Common myeloid progenitor, CD34-positive (primary cell): ENCODE measurements at regions of chr1 and their contacts with region 1.

Region 1: GRCh38 chr1:108125312-108126138 is 74.6 kb downstream of the SLC25A24 start:
- DNase-seq: peak; percentile 84 to 89 (median 85)
- H3K4me3 ChIP-seq: no peak overlapping the region
- H3K27ac ChIP-seq: no peak overlapping the region
- H3K4me1 ChIP-seq: peaks cover 0 to 16% (median 8%) of the 10 kb centered on the region in 4 experiments
- H3K27me3 ChIP-seq: no peaks in the 10 kb centered on the region

Region 2: DNA sequence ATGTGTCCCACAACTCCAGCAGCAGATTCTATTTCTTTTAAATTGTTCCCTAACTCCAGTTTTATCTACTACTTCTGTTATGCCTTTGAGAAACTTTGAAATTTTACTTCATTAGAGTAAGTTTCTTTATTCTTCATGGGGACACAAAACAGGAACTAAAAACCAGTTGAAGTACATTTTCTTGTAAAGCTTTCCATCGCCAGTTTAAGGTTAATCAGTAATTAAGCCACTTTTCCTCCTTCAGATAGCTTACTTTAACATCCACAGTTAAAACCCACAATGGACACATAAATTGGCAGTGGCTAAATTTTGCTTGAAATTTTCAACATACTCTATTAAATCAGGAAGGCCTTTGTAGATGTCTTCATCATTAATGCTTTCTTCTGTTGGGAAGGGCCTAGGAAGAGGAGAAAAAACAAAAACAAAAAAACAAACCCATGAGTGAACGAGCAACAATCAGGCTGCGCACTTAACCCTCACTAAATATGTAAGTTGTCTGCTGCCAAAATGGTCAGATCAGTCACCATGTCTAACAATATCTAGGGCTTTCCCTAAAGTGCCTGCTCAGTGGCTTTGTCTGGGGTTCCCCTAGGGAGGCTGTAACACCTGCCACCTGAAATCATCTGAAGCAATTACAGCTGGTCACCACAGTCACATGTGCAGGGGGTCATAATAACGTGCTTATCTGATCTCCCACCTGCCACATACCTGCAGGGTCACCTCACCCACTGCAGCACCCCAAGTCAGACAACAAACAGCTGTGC is 348.4 kb before region 1 on chr1:
- CTCF ChIA-PET with region 1: interaction called, 271 read pairs
- POLR2A ChIA-PET with region 1: interaction called, 5 read pairs
- DNase-seq: peak in 2 of 3 donors; percentile 36 to 37
- H3K4me3 ChIP-seq: no peak overlapping the region
- H3K27ac ChIP-seq: no peak overlapping the region
- H3K4me1 ChIP-seq: peaks cover 0 to 5% (median 2%) of the 10 kb centered on the region in 4 experiments
- H3K27me3 ChIP-seq: no peaks in the 10 kb centered on the region

Region 3: GRCh38 chr1:108043707-108044287 is 81.7 kb before region 1 on chr1:
- CTCF ChIA-PET with region 1: interaction called, 35 read pairs
- POLR2A ChIA-PET with region 1: no interaction called
- DNase-seq: peak; percentile 85 to 97 (median 95)
- H3K4me3 ChIP-seq: no peak overlapping the region
- H3K27ac ChIP-seq: no peak overlapping the region
- H3K4me1 ChIP-seq: peaks cover 12 to 73% (median 43%) of the 10 kb centered on the region in 4 experiments
- H3K27me3 ChIP-seq: no peaks in the 10 kb centered on the region

Region 4: GRCh38 chr1:108107658-108108518 is 17.6 kb before region 1 on chr1:
- CTCF ChIA-PET with region 1: interaction called, 12 read pairs
- POLR2A ChIA-PET with region 1: no interaction called
- DNase-seq: peak; percentile 76 to 93 (median 92)
- H3K4me3 ChIP-seq: peak overlapping the region in 1 of 7 experiments; percentile 36
- H3K27ac ChIP-seq: peak overlapping the region in 1 of 2 experiments; percentile 52
- H3K4me1 ChIP-seq: peaks cover 0 to 21% (median 12%) of the 10 kb centered on the region in 4 experiments
- H3K27me3 ChIP-seq: no peaks in the 10 kb centered on the region

Region 5: GRCh38 chr1:108182959-108183700 is 57.6 kb after region 1 on chr1:
- CTCF ChIA-PET with region 1: no interaction called
- POLR2A ChIA-PET with region 1: no interaction called
- DNase-seq: no peak
- H3K4me3 ChIP-seq: no peak overlapping the region
- H3K27ac ChIP-seq: no peak overlapping the region
- H3K4me1 ChIP-seq: no peaks in the 10 kb centered on the region
- H3K27me3 ChIP-seq: no peaks in the 10 kb centered on the region

Region 6: GRCh38 chr1:108208724-108209429 is 83.4 kb after region 1 on chr1:
- CTCF ChIA-PET with region 1: no interaction called
- POLR2A ChIA-PET with region 1: no interaction called
- DNase-seq: peak in 1 of 3 donors; percentile 33
- H3K4me3 ChIP-seq: no peak overlapping the region
- H3K27ac ChIP-seq: no peak overlapping the region
- H3K4me1 ChIP-seq: no peaks in the 10 kb centered on the region
- H3K27me3 ChIP-seq: peaks cover 0 to 6% (median 0%) of the 10 kb centered on the region in 5 experiments